RWPE1 (cell line): ENCODE measurements at regions of chr2 and their contacts with region 1.

Region 1: DNA sequence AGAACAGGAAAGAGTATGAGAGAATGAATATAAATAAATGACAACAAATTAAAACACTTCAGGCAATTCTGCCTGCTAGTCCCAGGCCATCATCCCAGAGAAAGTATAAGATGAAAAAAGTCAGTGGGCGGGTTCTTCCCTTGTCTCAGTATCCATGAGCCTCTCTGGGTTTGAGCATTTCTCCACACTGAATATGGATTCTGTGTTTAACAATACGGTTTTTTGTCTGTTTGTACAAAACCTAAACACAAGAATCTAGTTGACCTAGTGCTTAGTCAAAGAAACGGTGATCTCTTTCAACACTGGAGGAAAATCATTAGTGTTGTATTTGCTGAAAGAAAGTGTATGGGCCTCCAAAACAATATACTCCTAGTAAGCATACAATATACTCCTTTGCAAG is 10.0 kb downstream of the SUCLG1 start:
- DNase-seq: no peak
- H3K27ac ChIP-seq: no peak overlapping the region
- CTCF ChIP-seq: no peak

Region 2: DNA sequence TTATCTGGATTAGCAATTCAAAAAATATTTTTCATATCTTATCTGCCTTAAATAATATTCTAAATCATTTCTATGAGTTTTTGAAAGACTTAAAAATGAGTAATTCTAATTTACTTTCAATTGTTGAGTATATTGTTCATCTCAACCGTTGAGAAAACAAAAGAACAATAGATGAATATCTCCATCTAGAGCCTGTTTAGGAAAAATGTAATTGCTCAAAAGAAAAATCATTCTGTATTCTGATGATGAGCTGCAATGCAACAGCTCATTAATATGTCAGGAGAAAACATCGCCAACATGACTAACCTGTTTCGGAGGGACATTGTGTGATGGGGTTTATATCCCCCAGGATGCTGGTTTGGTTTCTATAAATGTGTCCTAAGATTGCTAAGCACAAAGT is 407.5 kb before region 1 on chr2:
- CTCF ChIA-PET with region 1: no interaction called
- POLR2A ChIA-PET with region 1: interaction called, 13 read pairs
- DNase-seq: no peak
- H3K27ac ChIP-seq: no peak overlapping the region
- CTCF ChIP-seq: no peak